CD14-positive monocyte (primary cell): ENCODE measurements at regions of chr9 and their contacts with region 1.

Region 1: DNA sequence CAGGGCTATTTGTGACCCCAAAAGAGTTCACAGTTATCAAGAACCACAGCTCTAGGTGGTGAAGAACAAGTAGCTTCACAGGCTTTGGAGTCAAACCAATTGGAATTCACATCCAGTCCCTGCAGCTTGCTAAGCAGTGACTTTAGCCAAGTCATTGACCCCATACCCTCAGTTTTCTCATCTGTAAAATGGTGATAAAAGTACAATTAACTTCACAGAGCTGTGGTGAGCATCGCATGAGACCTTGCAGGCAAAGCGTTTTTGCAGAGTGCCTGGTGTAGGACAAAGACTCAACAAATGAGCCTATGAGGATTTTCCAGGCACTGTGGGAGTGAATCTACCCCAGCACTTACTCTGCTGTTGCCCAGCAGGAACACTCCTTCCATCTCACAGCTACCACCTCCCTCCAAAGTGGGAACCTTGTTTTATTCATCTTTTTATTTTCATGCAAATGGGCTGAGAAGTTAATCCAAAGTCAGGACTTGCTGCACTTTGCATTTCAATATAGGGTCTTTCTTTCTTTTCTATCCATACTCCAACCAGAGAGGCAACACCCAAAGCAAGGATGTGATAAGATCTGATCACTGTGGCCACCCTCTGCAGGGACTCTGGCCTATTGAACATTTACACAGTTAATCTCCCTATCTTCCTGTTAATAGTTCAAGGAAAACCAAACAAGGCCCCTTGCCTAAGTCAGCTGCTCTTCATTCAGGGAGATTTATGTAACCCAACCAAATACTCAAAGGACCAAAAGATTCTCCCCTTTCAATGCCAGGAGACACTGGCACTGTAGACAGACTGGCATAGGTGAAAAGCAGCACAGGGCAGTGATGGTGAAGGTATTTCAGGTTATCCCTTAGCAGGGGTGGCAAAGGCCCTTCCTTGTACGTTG is 41.9 kb downstream of the ABCA1 start:
- DNase-seq: no peak
- H3K4me3 ChIP-seq: no peak overlapping the region
- H3K4me3 Mint-ChIP-seq: no peak overlapping the region
- H3K27ac ChIP-seq: no peak overlapping the region
- H3K27ac Mint-ChIP-seq: no peak overlapping the region
- H3K4me1 ChIP-seq: no peaks in the 10 kb centered on the region
- H3K4me1 Mint-ChIP-seq: no peaks in the 10 kb centered on the region
- H3K27me3 ChIP-seq: no peaks in the 10 kb centered on the region
- H3K27me3 Mint-ChIP-seq: no peaks in the 10 kb centered on the region
- CTCF ChIP-seq: no peak

Region 2: DNA sequence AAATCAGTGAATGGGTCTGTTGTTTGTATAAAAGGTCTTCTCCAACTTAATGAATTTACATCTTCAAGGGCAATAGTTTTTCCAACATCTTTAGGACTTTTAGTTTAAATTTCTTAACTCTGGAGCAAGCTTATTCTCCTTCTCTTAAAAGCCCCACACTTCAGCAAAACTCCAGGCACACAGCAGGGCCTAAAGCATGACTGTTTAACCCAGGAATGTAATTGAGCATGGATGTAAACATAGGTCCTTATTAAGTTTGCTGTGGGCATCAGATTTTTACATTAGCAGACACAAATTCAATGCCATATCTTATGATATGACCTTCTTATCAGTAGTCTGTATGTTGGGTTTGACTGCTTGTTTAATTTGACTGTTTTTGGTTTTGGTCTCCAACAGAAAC is 37.0 kb before region 1 on chr9:
- intact Hi-C with region 1: loop called in 1 of 2 experiments (anchors 5 kb)
- DNase-seq: no peak
- H3K4me3 ChIP-seq: no peak overlapping the region
- H3K4me3 Mint-ChIP-seq: no peak overlapping the region
- H3K27ac ChIP-seq: no peak overlapping the region
- H3K27ac Mint-ChIP-seq: no peak overlapping the region
- H3K4me1 ChIP-seq: peaks cover 12 to 16% of the 10 kb centered on the region in 2 donors
- H3K4me1 Mint-ChIP-seq: peaks cover 20% of the 10 kb centered on the region
- H3K27me3 ChIP-seq: no peaks in the 10 kb centered on the region
- H3K27me3 Mint-ChIP-seq: no peaks in the 10 kb centered on the region
- CTCF ChIP-seq: no peak

Region 3: GRCh38 chr9:104907278-104907951 is 21.4 kb after region 1 on chr9:
- intact Hi-C with region 1: no loop called
- DNase-seq: no peak
- H3K4me3 ChIP-seq: no peak overlapping the region
- H3K4me3 Mint-ChIP-seq: no peak overlapping the region
- H3K27ac ChIP-seq: no peak overlapping the region
- H3K27ac Mint-ChIP-seq: no peak overlapping the region
- H3K4me1 ChIP-seq: peaks cover 15 to 18% of the 10 kb centered on the region in 2 donors
- H3K4me1 Mint-ChIP-seq: peaks cover 32% of the 10 kb centered on the region
- H3K27me3 ChIP-seq: no peaks in the 10 kb centered on the region
- H3K27me3 Mint-ChIP-seq: no peaks in the 10 kb centered on the region
- CTCF ChIP-seq: no peak